ENCODE measurements at regions of chr6 and their contacts with region 1.

Region 1: GRCh38 chr6:111361648-111362047 is 121.4 kb downstream of the REV3L start:
- DNase-seq: no peak
- H3K4me3 ChIP-seq: no peak overlapping the region
- H3K27ac ChIP-seq: no peak overlapping the region
- H3K4me1 ChIP-seq: no peaks in the 10 kb centered on the region
- H3K27me3 ChIP-seq: no peaks in the 10 kb centered on the region
- CTCF ChIP-seq: peak in 3 of 4 experiments; percentile 28 to 48 (median 45)
- POLR2A ChIP-seq: no peak

Region 2: DNA sequence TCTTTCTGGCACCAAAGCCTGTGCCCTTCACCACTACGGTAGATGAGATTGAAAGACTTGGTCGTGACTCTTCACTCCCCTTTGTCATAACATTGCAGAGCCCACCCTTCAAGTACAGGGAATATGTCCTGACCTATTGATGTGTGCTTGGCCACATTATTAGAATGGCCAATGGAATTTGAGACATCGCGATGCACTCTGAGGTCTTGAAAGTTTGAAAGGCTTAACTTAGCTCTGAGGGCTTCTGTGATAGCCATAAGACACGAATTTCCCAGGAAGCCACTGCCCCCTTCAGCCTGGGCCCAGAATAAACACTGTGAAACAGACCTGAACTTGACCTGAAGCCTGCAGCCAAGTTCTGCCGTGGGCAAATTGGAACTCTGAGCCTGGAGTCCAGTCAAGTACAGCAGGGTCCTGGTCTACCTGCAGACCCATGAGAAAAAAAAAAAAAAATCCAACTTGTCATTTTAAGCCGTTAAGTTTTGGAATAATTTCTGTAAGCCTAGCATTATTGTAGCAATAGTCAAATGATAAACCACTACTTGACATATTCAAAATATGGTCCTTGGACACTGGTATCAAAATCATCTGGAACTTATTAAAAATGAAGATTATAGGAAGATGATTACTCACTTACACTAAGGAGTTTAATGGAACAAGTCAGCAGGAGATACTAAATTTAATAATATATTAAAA is 281.0 kb after region 1 on chr6:
- intact Hi-C with region 1: loop called (anchors 5 kb)
- DNase-seq: no peak
- H3K4me3 ChIP-seq: no peak overlapping the region
- H3K27ac ChIP-seq: no peak overlapping the region
- H3K4me1 ChIP-seq: no peaks in the 10 kb centered on the region
- H3K27me3 ChIP-seq: no peaks in the 10 kb centered on the region
- CTCF ChIP-seq: peak in 2 of 4 experiments; percentile 55
- POLR2A ChIP-seq: no peak